ENCODE measurements at regions of chr1 and their contacts with region 1.

Region 1: GRCh38 chr1:182397771-182398393 is 2.6 kb downstream of the TEDDM1 start:
- DNase-seq: no peak
- ATAC-seq: no peak
- H3K4me3 ChIP-seq: no peak overlapping the region
- H3K27ac ChIP-seq: peak overlapping the region in 2 of 10 donors; percentile 4 to 39
- H3K4me1 ChIP-seq: peaks cover 0 to 35% (median 19%) of the 10 kb centered on the region in 9 donors
- H3K27me3 ChIP-seq: no peaks in the 10 kb centered on the region
- CTCF ChIP-seq: no peak

Region 2: DNA sequence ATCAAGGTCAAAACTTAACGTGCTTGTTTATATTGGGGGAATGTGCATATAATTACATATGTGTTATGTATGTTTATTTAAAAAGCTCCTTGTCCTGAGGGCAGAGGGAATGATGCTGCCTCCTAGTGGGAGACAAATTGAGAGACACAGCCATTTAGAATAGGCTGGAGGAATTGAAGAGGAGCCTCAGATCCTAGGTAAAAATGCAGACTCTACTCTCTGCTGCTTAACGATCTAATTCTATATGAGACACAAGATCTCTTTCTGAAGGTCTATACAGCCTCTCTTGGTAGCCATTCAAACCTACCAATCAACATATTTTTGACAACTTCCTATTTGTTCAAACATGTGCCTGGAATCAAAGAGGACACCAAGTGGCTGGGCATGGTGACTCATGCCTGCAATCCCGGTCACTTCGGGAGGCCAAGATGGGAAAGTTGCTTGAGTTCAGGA is 199.8 kb before region 1 on chr1:
- intact Hi-C with region 1: loop called in 2 of 10 experiments (anchors 5 to 10 kb)
- DNase-seq: no peak
- ATAC-seq: peak in 1 of 8 donors; percentile 49
- H3K4me3 ChIP-seq: no peak overlapping the region
- H3K27ac ChIP-seq: peak overlapping the region in 2 of 10 donors; percentile 4 to 70
- H3K4me1 ChIP-seq: peaks cover 0 to 31% (median 12%) of the 10 kb centered on the region in 9 donors
- H3K27me3 ChIP-seq: no peaks in the 10 kb centered on the region
- CTCF ChIP-seq: peak in 5 of 9 donors; percentile 12 to 37 (median 28)

Region 3: DNA sequence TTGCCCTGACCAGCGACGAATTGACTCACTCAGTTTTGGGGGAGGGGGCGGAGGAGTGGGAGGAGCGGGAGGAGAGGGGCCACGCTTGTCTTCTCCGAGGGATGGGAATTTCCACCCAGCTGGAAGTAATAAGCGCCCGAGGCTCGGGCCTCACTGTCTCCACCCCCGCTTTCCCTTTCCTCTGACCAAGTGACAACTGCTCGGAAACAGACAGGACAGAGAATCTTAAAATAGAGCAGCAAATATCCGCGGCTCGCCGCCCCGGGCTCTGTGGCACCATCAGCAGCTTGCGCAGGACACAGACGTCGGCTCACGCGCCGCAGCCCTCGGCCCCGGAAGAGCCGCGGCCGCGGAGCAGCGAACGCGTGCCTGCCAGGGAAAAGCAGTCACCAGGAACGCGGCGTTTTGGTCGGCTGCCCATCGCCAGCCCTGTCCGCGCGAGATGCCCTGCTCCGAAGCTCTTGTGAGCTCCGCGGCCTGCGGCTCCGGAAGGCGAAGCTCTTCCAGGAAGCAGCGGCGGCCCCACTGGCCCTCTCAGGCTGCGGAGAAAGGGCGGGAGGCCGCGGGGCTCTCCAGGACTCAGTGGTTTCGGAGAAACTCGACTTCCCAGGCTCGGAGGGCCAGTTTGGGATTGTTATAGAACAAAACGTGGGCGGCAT is 217.0 kb after region 1 on chr1:
- intact Hi-C with region 1: no loop called
- DNase-seq: peak; percentile 83 to 91
- ATAC-seq: peak; percentile 85 to 94 (median 92)
- H3K4me3 ChIP-seq: peak overlapping the region; percentile 19 to 61 (median 56)
- H3K27ac ChIP-seq: peak overlapping the region; percentile 86 to 98 (median 92)
- H3K4me1 ChIP-seq: peaks cover 0 to 34% (median 21%) of the 10 kb centered on the region in 9 donors
- H3K27me3 ChIP-seq: peaks cover 0 to 47% (median 0%) of the 10 kb centered on the region in 7 donors
- CTCF ChIP-seq: no peak